ENCODE measurements at regions of chr7 and their contacts with region 1.

Region 1: GRCh38 chr7:144842377-144842851 is 6.6 kb upstream of the TPK1 start:
- DNase-seq: no peak
- H3K4me3 Mint-ChIP-seq: peak overlapping the region; percentile 24
- H3K27ac Mint-ChIP-seq: peak overlapping the region; percentile 94
- H3K4me1 Mint-ChIP-seq: peaks cover 30% of the 10 kb centered on the region
- H3K27me3 Mint-ChIP-seq: peaks cover 3% of the 10 kb centered on the region

Region 2: GRCh38 chr7:144821067-144821466 is 21.3 kb before region 1 on chr7:
- intact Hi-C with region 1: loop called (anchors 1 kb)
- DNase-seq: no peak
- H3K4me3 Mint-ChIP-seq: peak overlapping the region; percentile 31
- H3K27ac Mint-ChIP-seq: peak overlapping the region; percentile 87
- H3K4me1 Mint-ChIP-seq: peaks cover 67% of the 10 kb centered on the region
- H3K27me3 Mint-ChIP-seq: no peaks in the 10 kb centered on the region